ENCODE measurements at regions of chr15 and their contacts with region 1.

Region 1: GRCh38 chr15:76190834-76191538 is 120.3 kb downstream of the ETFA start:
- DNase-seq: peak; percentile 43
- ATAC-seq: peak; percentile 98
- H3K4me3 ChIP-seq: peak overlapping the region; percentile 23; the same call in 1 of the 2 replicates
- H3K27ac ChIP-seq: peak overlapping the region; percentile 60
- H3K4me1 ChIP-seq: peaks cover 14% of the 10 kb centered on the region
- H3K27me3 ChIP-seq: 0 out of 4 replicates have a peak, but pooled peaks cover 0 to 1% of the 10 kb centered on the region in 2 experiments
- CTCF ChIP-seq: peak; percentile 87 to 94 (median 92)
- EP300 ChIP-seq: no peak
- POLR2A ChIP-seq: no peak
- RAD21 ChIP-seq: peak; percentile 87

Region 2: GRCh38 chr15:76123031-76123430 is 68.0 kb before region 1 on chr15:
- CTCF ChIA-PET with region 1: no interaction called
- POLR2A ChIA-PET with region 1: no interaction called
- RAD21 ChIA-PET with region 1: no interaction called
- SMC1A ChIA-PET with region 1: no interaction called
- in situ Hi-C with region 1: no loop called
- intact Hi-C with region 1: no loop called
- DNase-seq: no peak
- ATAC-seq: no peak
- H3K4me3 ChIP-seq: no peak overlapping the region
- H3K27ac ChIP-seq: no peak overlapping the region
- H3K4me1 ChIP-seq: no peaks in the 10 kb centered on the region
- H3K27me3 ChIP-seq: no peaks in the 10 kb centered on the region; a peak in 1 of 4 replicates
- CTCF ChIP-seq: no peak
- EP300 ChIP-seq: no peak
- POLR2A ChIP-seq: no peak
- RAD21 ChIP-seq: no peak

Region 3: DNA sequence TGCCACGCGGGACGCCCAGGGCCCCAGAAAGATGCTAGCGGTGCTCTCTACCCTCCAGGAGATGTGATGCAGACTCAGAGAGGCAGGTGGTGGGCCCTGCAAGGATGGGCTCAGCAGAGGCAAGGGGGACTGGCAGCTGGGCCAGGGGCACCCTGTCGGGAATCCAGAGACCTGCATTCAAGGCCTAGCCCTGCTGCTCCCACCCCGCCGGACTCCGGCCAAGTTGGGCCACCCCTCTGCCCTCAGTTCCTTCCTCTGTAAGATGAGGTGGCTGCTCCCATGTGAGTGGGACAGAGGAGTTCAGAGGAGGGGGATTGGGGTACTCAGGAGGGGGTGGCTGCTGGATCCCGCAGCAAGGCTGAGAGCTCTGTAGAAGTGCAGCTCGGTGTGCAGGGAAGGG is 14.9 kb before region 1 on chr15:
- CTCF ChIA-PET with region 1: no interaction called
- POLR2A ChIA-PET with region 1: no interaction called
- RAD21 ChIA-PET with region 1: no interaction called
- SMC1A ChIA-PET with region 1: no interaction called
- in situ Hi-C with region 1: no loop called
- intact Hi-C with region 1: no loop called
- DNase-seq: no peak
- ATAC-seq: no peak
- H3K4me3 ChIP-seq: no peak overlapping the region
- H3K27ac ChIP-seq: no peak overlapping the region
- H3K4me1 ChIP-seq: peaks cover 3% of the 10 kb centered on the region
- H3K27me3 ChIP-seq: peaks cover 0 to 4% of the 10 kb centered on the region in 2 experiments
- CTCF ChIP-seq: no peak
- EP300 ChIP-seq: no peak
- POLR2A ChIP-seq: no peak
- RAD21 ChIP-seq: no peak

Region 4: GRCh38 chr15:76286271-76286879 is 95.4 kb after region 1 on chr15:
- CTCF ChIA-PET with region 1: interaction called, 9 read pairs
- POLR2A ChIA-PET with region 1: no interaction called
- RAD21 ChIA-PET with region 1: no interaction called
- SMC1A ChIA-PET with region 1: interaction called, 4 read pairs
- in situ Hi-C with region 1: no loop called
- intact Hi-C with region 1: loop called (anchors 2 kb)
- DNase-seq: peak; percentile 28
- ATAC-seq: peak; percentile 93
- H3K4me3 ChIP-seq: no peak overlapping the region
- H3K27ac ChIP-seq: peak overlapping the region; percentile 27
- H3K4me1 ChIP-seq: peaks cover 4% of the 10 kb centered on the region; the same call in 1 of the 2 replicates
- H3K27me3 ChIP-seq: no peaks in the 10 kb centered on the region
- CTCF ChIP-seq: no peak
- EP300 ChIP-seq: no peak
- POLR2A ChIP-seq: no peak
- RAD21 ChIP-seq: no peak

Region 5: GRCh38 chr15:76336254-76337058 is 145.5 kb after region 1 on chr15 and contains the start of gene ISL2:
- CTCF ChIA-PET with region 1: interaction called, 11 read pairs
- POLR2A ChIA-PET with region 1: no interaction called
- RAD21 ChIA-PET with region 1: interaction called, 4 read pairs
- SMC1A ChIA-PET with region 1: interaction called, 3 read pairs
- in situ Hi-C with region 1: no loop called
- intact Hi-C with region 1: loop called (anchors 5 kb)
- DNase-seq: peak; percentile 61
- ATAC-seq: peak; percentile 30
- H3K4me3 ChIP-seq: peak within 1 kb of the TSS; percentile 62
- H3K27ac ChIP-seq: peak within 1 kb of the TSS; percentile 51
- H3K4me1 ChIP-seq: peaks cover 25% of the 10 kb centered on the region
- H3K27me3 ChIP-seq: peaks cover 11 to 22% of the 10 kb centered on the region in 2 experiments
- CTCF ChIP-seq: no peak
- EP300 ChIP-seq: no peak
- POLR2A ChIP-seq: peak; percentile 88
- RAD21 ChIP-seq: no peak
- polyA plus RNA-seq, gene ISL2: not detected

Region 6: DNA sequence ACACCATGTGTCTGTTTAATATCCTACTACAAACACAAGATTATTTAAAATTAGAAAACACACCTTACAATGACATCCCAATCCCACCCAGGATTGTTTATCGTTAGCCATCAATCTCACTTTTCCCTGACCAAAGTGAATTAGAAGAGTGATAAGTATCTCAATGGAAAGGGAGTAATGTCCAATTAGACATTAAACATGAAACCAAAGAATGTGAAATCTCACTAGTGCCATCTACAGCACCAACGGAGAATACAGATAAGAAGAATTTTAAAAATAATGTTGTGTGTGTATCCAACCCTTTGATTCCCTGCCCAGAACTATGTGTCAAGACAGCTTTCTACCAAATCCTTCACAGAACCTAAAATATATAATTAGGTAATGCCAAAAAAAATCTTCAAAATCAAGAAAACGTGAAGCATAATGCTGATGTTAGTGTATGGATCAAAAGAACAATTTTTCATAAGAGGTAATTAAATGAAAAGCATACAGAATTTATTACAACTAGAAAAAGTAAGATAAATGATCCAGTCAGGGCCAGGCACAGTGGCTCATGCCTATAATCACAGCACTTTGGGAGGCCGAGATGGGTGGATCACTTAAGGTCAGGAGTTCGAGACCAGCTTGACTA is 650.0 kb after region 1 on chr15:
- CTCF ChIA-PET with region 1: interaction called, 7 read pairs
- POLR2A ChIA-PET with region 1: no interaction called
- RAD21 ChIA-PET with region 1: no interaction called
- SMC1A ChIA-PET with region 1: interaction called, 3 read pairs
- in situ Hi-C with region 1: no loop called
- intact Hi-C with region 1: loop called (anchors 1 kb)
- DNase-seq: no peak
- ATAC-seq: peak; percentile 72
- H3K4me3 ChIP-seq: no peak overlapping the region
- H3K27ac ChIP-seq: no peak overlapping the region
- H3K4me1 ChIP-seq: peaks cover 10% of the 10 kb centered on the region; the same call in 1 of the 2 replicates
- H3K27me3 ChIP-seq: no peaks in the 10 kb centered on the region
- CTCF ChIP-seq: peak; percentile 48 to 57 (median 49); a peak in 4 of 6 replicates
- EP300 ChIP-seq: no peak
- POLR2A ChIP-seq: no peak
- RAD21 ChIP-seq: peak; percentile 70

Region 7: GRCh38 chr15:76866716-76867321 is 675.8 kb after region 1 on chr15:
- CTCF ChIA-PET with region 1: interaction called, 18 read pairs
- POLR2A ChIA-PET with region 1: no interaction called
- RAD21 ChIA-PET with region 1: interaction called, 14 read pairs
- SMC1A ChIA-PET with region 1: interaction called, 5 read pairs
- in situ Hi-C with region 1: no loop called
- intact Hi-C with region 1: loop called (anchors 1 kb)
- DNase-seq: no peak
- ATAC-seq: peak; percentile 53; the same call in 2 of the 3 replicates
- H3K4me3 ChIP-seq: no peak overlapping the region
- H3K27ac ChIP-seq: no peak overlapping the region
- H3K4me1 ChIP-seq: peaks cover 5% of the 10 kb centered on the region; the same call in 1 of the 2 replicates
- H3K27me3 ChIP-seq: no peaks in the 10 kb centered on the region
- CTCF ChIP-seq: peak; percentile 43 to 51 (median 47); a peak in 5 of 6 replicates
- EP300 ChIP-seq: no peak
- POLR2A ChIP-seq: no peak
- RAD21 ChIP-seq: peak; percentile 82